Heart left ventricle (tissue), 16 donors: ENCODE measurements at regions of chr7 and their contacts with region 1.

Region 1: DNA sequence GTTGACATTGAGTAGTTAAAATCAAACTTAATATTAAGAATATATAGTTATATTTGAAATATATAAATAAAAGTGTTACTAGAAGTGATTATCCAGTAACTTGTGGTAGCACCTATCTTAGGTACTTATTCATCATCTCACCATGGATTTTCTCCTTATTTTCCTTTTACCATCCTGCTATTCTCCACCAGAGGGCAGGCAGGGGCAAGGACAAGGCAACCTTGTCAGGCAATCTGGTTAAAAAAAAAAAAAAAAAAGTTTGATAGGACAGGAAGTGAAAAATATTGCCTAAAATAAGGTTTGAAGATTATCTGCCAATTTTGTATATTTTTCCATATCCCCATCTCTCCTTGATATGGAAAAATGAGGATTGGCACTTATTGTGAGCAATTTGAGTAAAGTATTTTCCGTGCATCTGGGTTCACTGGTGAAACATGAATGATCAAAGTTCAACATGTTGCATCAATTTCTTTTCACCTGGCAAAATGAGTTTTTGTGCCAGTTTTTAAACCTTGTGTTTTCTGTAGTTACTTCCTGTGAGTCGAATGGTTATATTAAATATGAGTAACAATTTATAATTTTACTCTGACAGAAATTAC is 256.7 kb downstream of the AGMO start:
- DNase-seq: peak in 4 of 5 donors; percentile 35 to 46 (median 42)
- ATAC-seq: peak in 1 of 4 donors; percentile 38
- H3K4me3 ChIP-seq: no peak overlapping the region
- H3K27ac ChIP-seq: no peak overlapping the region
- H3K4me1 ChIP-seq: no peaks in the 10 kb centered on the region
- H3K27me3 ChIP-seq: no peaks in the 10 kb centered on the region
- CTCF ChIP-seq: peak; percentile 54 to 84 (median 76)
- POLR2A ChIP-seq: no peak

Region 2: GRCh38 chr7:15086131-15086611 is 218.9 kb before region 1 on chr7:
- intact Hi-C with region 1: no loop called
- DNase-seq: no peak
- ATAC-seq: no peak
- H3K4me3 ChIP-seq: no peak overlapping the region
- H3K27ac ChIP-seq: no peak overlapping the region
- H3K4me1 ChIP-seq: no peaks in the 10 kb centered on the region
- H3K27me3 ChIP-seq: no peaks in the 10 kb centered on the region
- CTCF ChIP-seq: no peak
- POLR2A ChIP-seq: no peak

Region 3: GRCh38 chr7:15720849-15721471 is 415.9 kb after region 1 on chr7:
- intact Hi-C with region 1: loop called in 2 of 10 experiments (anchors 5 to 10 kb)
- DNase-seq: peak in 3 of 5 donors; percentile 24 to 33 (median 26)
- ATAC-seq: no peak
- H3K4me3 ChIP-seq: no peak overlapping the region
- H3K27ac ChIP-seq: peak overlapping the region in 1 of 12 donors; percentile 17
- H3K4me1 ChIP-seq: peaks cover 0 to 16% (median 6%) of the 10 kb centered on the region in 12 donors
- H3K27me3 ChIP-seq: no peaks in the 10 kb centered on the region
- CTCF ChIP-seq: peak; percentile 52 to 86 (median 74)
- POLR2A ChIP-seq: no peak

Region 4: DNA sequence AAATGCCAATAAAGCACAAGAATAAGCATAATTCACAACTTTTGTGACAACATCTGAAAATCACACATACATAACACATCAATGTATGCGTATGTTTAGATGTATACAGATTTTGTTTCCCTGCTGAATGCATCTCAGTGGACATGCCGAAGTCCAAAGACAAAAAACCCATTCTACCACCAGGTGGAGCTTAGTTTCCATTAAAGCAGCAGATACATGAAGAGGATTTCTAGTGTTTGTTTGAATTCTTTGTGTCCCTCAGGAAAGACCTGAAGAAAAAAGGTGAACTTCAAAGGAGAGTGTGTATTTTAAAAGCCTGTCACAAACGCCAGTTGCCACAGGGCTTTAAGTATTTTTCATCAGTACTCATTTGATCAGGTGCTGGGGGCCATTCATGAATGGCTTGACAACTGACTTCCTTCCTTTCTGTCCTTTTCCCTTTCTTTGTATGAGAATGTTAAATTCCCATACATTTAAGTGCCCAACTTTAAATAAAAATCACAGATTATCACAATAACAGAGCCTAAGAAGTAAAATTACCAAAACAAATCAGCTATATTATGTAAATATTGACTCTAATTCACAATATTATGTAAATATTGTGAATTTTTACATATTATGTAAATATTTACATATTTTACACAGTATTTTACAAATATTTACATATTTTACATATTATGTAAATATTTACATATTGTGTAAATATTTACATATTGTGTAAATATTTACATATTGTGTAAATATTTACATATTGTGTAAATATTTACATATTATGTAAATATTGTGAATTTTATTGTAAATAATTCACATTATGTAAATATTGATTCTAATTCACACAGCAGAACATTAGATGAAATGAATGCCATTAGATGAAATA is 773.2 kb after region 1 on chr7:
- intact Hi-C with region 1: loop called in 5 of 10 experiments (anchors 5 kb)
- DNase-seq: peak in 1 of 5 donors; percentile 45
- ATAC-seq: peak in 2 of 4 donors; percentile 65 to 66
- H3K4me3 ChIP-seq: no peak overlapping the region
- H3K27ac ChIP-seq: no peak overlapping the region
- H3K4me1 ChIP-seq: peaks cover 0 to 4% (median 0%) of the 10 kb centered on the region in 12 donors
- H3K27me3 ChIP-seq: no peaks in the 10 kb centered on the region
- CTCF ChIP-seq: peak; percentile 52 to 86 (median 74)
- POLR2A ChIP-seq: no peak